Activated naive CD4-positive, alpha-beta T cell treated with anti-CD3 and anti-CD28 coated beads for 36 hours (primary cell): ENCODE measurements at regions of chr11 and their contacts with region 1.

Region 1: DNA sequence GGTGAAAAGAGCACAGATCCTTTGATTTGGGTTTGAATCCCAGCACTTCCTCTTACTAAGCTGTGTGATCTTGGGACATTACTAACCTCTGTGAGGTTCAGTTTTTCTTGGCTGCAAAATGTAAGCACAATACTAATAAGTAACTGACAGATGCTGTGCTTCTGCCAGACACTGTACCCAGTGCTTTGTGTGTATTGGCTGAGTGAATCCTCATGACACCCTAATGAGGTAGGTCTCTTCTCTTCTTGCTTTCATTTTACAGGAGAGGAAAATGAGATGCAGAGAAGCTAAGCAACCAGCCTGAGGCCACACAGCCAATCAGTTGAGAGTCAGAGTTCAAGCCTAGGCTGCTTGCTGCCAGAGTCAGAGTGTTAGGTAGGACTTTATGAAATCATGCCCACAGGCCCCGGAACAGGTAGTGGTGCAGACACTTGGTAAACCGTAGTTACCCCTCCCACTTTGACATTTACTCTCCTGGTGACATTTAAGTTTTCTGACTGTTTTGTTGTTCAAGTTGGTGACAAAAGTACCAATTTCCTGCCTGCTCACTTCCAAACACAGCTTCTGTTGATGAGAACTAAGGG is 21.2 kb downstream of the PTPRJ start:
- DNase-seq: peak; percentile 89
- H3K4me3 Mint-ChIP-seq: peak overlapping the region; percentile 66
- H3K27ac Mint-ChIP-seq: peak overlapping the region; percentile 96
- H3K4me1 Mint-ChIP-seq: peaks cover 88% of the 10 kb centered on the region
- H3K27me3 Mint-ChIP-seq: no peaks in the 10 kb centered on the region

Region 2: DNA sequence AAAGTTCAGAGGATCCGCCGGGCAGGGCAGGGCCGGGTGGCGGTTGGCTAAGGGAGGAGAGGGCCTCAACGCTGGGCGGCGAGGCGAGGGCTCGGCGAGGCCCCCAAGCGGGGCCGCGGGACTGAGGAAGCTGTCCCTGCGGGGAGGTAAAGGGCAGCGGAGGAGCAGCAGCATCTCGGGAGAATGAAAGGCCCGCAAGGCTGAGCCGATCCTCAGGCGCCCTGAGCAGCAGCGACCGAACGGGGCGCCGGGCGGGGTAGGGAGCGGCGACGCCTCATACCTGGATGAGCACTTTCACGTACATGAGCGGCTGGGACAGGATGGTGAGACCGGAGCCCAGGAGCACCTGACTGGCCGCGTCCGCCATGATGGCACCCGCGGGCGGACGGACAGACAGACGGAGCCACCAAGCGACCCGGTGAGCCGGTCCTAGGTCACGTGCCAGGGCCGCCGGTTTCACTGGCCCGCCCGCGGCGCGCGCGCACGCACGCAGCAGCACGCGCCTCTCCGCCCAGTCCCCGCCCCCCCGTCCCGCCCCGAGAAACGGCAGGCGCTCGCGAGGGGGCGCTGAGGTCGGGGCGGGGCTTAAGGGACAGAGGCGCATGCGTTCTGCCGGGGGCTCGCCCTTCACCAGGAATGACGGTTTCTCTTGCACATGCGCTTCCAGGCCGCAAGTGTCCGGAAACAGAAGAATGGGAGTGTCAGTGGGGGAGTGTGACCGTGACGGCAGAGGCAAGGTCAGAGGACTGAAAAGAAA is 359.3 kb before region 1 on chr11 and contains the start of gene MTCH2:
- CTCF ChIA-PET with region 1: no interaction called
- intact Hi-C with region 1: loop called (anchors 1 kb)
- DNase-seq: peak; percentile 97
- H3K4me3 Mint-ChIP-seq: peak within 1 kb of the TSS; percentile 91
- H3K27ac Mint-ChIP-seq: peak within 1 kb of the TSS; percentile 81
- H3K4me1 Mint-ChIP-seq: peaks cover 19% of the 10 kb centered on the region
- H3K27me3 Mint-ChIP-seq: no peaks in the 10 kb centered on the region
- total RNA-seq, gene MTCH2: 93.7 to 95.1 TPM

Region 3: GRCh38 chr11:47928426-47928825 is 73.1 kb before region 1 on chr11:
- CTCF ChIA-PET with region 1: interaction called, 18 read pairs
- intact Hi-C with region 1: no loop called
- DNase-seq: no peak
- H3K4me3 Mint-ChIP-seq: no peak overlapping the region
- H3K27ac Mint-ChIP-seq: no peak overlapping the region
- H3K4me1 Mint-ChIP-seq: peaks cover 28% of the 10 kb centered on the region
- H3K27me3 Mint-ChIP-seq: no peaks in the 10 kb centered on the region

Region 4: GRCh38 chr11:48020092-48020755 is 18.7 kb after region 1 on chr11:
- CTCF ChIA-PET with region 1: interaction called, 10 read pairs
- intact Hi-C with region 1: loop called (anchors 1 kb)
- DNase-seq: peak; percentile 61
- H3K4me3 Mint-ChIP-seq: no peak overlapping the region
- H3K27ac Mint-ChIP-seq: peak overlapping the region; percentile 61
- H3K4me1 Mint-ChIP-seq: peaks cover 64% of the 10 kb centered on the region
- H3K27me3 Mint-ChIP-seq: no peaks in the 10 kb centered on the region

Region 5: DNA sequence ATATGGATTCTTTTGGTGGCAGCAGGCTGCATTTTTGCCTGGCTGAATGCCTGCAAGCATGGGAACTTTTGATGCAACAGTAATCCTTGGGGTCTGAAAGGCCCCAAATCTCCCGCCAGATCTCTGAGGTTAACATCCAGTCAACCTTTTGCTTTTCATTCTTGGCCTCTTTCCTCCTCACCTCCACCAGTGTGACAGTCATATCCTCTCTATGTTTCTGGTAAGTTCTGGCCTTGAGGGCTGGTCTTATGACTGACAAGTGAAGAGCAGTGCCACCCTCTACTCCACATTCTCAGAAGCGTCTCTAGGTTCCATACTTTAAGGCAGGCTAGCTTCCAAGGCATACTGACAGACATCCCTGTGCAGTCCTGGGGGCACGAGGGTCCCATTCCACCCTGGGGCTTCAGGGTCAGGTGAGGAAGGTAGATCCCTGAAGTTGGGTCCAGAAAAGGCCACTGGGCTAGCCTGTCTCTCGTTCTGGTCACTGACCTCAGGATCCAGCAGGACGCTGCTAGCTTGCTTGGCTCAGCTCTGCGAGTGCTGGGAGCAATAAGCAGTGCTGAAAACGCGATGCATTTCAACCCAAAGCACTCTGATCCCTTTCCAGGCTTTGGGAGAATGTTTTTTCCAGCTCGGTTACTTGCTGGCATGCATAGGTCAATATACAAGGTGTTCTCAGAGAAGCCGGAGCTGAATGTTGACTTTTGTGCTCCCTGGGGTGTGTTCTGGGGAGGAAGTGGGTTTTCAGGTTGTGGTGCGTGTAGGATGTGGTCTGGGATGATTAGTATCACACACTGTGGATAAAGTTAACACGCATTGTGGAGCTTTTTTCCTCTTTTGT is 54.0 kb after region 1 on chr11:
- CTCF ChIA-PET with region 1: interaction called, 18 read pairs
- intact Hi-C with region 1: loop called (anchors 1 kb)
- DNase-seq: peak; percentile 88
- H3K4me3 Mint-ChIP-seq: peak overlapping the region; percentile 54
- H3K27ac Mint-ChIP-seq: peak overlapping the region; percentile 76
- H3K4me1 Mint-ChIP-seq: peaks cover 84% of the 10 kb centered on the region
- H3K27me3 Mint-ChIP-seq: no peaks in the 10 kb centered on the region